H1 (cell line): ENCODE measurements at regions of chr7 and their contacts with region 1.

Region 1: DNA sequence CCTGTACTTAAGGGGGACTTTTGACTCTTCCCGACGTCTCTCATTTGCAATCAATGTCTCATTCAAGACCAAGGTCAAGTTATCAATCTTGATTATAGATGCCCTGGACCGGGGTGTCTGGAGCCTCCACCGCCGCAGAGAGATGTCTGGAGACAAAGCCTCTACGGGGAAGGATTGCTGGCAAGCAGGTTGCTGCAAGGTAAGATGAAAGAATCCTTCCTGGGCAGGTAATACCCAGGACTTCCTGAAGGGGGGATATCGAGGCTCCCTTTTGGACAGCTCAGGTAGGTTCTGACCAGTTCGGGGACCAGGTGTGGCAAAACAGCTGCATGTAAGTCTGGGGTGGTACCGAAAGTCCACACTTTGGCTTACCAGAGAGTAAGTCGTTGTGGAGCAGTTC is 12.5 kb upstream of the CUX1 start:
- DNase-seq: peak; percentile 27 to 84
- H3K4me3 ChIP-seq: peak overlapping the region; percentile 20 to 44 (median 21); a peak in 5 of 8 replicates
- H3K27ac ChIP-seq: no peak overlapping the region
- H3K4me1 ChIP-seq: peaks cover 4 to 15% (median 8%) of the 10 kb centered on the region in 4 experiments; a peak in 5 of 7 replicates
- H3K27me3 ChIP-seq: peaks cover 0 to 7% (median 2%) of the 10 kb centered on the region in 4 experiments; a peak in 4 of 7 replicates
- CTCF ChIP-seq: peak; percentile 34 to 71 (median 51)
- EP300 ChIP-seq: no peak
- POLR2A ChIP-seq: no peak
- RAD21 ChIP-seq: peak; percentile 46 to 67

Region 2: GRCh38 chr7:101688183-101688831 is 116.7 kb before region 1 on chr7:
- CTCF ChIA-PET with region 1: interaction called, 24 read pairs
- POLR2A ChIA-PET with region 1: no interaction called
- DNase-seq: peak in 1 of 2 experiments; percentile 98
- H3K4me3 ChIP-seq: peak overlapping the region in 1 of 4 experiments; percentile 43; a peak in 2 of 8 replicates
- H3K27ac ChIP-seq: no peak overlapping the region
- H3K4me1 ChIP-seq: no peaks in the 10 kb centered on the region; a peak in 2 of 7 replicates
- H3K27me3 ChIP-seq: peaks cover 0 to 2% (median 0%) of the 10 kb centered on the region in 4 experiments; a peak in 1 of 7 replicates
- CTCF ChIP-seq: peak; percentile 84 to 91 (median 86)
- EP300 ChIP-seq: no peak
- POLR2A ChIP-seq: no peak
- RAD21 ChIP-seq: peak; percentile 91 to 93

Region 3: GRCh38 chr7:101733713-101734475 is 71.1 kb before region 1 on chr7:
- CTCF ChIA-PET with region 1: interaction called, 10 read pairs
- POLR2A ChIA-PET with region 1: no interaction called
- DNase-seq: peak in 1 of 2 experiments; percentile 71
- H3K4me3 ChIP-seq: peak overlapping the region in 1 of 4 experiments; percentile 31; a peak in 1 of 8 replicates
- H3K27ac ChIP-seq: 0 out of 2 replicates have a peak overlapping the region, but pooled peaks have one; percentile 38
- H3K4me1 ChIP-seq: peaks cover 3 to 13% (median 7%) of the 10 kb centered on the region in 4 experiments; a peak in 5 of 7 replicates
- H3K27me3 ChIP-seq: no peaks in the 10 kb centered on the region
- CTCF ChIP-seq: no peak
- EP300 ChIP-seq: no peak
- POLR2A ChIP-seq: no peak
- RAD21 ChIP-seq: no peak

Region 4: DNA sequence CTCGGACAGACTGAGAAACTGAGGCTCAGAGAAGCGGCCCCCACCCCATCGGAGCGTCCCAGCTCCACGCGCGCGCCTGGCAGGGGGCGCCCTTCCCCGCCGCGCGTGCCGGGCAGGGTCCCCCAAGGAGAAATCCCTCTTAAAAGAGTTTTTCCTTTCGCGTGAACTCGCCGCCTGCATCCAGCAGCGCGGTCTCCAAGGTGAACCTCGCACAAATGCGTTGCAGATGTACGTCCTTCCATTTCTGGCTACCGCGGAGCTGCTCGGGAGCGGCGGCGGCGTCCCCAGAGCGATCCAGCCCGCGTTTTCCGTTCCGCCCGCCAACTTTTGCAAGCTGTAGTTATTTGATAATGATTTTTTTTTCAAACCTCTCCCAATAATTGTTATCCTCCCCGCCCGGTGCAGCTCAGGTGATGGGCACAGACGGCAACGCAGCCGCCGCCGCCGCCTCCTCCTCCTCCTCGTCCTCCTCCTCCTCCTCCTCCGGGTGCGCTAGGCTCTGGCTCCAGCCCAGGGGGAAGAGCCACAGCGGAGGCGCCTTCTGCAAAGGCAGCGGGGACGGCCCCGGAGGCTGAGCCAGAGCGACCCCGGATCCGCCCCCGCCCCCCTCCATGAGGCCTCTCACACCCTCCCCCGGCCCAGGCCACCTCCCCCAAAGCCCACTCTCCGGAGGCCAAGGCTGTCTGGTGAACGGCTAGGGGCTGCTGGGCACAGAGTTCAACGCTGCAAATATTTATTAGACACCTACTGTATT is 61.5 kb before region 1 on chr7:
- CTCF ChIA-PET with region 1: interaction called, 21 read pairs
- POLR2A ChIA-PET with region 1: interaction called, 9 read pairs
- DNase-seq: peak; percentile 25 to 81
- H3K4me3 ChIP-seq: peak overlapping the region; percentile 52 to 85 (median 60)
- H3K27ac ChIP-seq: peak overlapping the region; percentile 71; the same call in 1 of the 2 replicates
- H3K4me1 ChIP-seq: peaks cover 0 to 13% (median 9%) of the 10 kb centered on the region in 4 experiments; a peak in 6 of 7 replicates
- H3K27me3 ChIP-seq: no peaks in the 10 kb centered on the region
- CTCF ChIP-seq: peak in 1 of 3 experiments; percentile 8; a peak in 1 of 4 replicates
- EP300 ChIP-seq: no peak
- POLR2A ChIP-seq: no peak
- RAD21 ChIP-seq: peak in 1 of 2 experiments; percentile 3; a peak in 1 of 4 replicates

Region 5: DNA sequence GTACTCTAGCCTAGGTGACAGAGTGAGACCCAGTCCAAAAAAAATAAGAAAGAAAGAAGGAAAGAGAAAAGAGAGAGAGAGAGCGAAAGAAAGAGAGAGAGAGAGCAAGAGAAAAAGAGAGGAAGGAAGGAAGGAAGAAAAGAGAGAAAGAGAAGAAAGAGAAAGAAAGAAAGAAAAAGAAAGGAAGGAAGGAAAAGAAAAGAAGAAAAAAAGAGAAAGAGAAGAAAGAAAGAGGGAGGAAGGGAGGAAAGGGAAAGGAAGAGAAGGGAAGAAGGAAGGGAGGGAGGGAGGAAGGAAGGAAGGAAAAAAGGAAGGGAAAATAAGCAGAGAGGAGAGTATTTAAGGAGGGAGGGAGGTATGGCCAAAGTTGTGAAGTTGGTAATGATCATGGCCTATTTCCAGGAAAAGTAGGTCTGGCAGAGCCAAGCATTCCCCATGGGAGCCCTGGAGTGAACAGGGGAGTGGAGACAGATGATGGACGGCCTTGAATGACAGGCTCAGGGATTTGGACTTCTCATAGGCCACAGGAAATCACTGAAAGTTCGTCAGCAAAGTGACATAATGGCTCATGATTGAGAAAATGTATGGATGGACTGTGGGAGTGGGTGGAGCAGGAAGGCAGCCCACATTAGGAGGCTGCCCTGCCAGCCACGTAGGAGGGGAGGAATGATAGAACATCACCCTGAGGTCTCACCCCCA is 32.3 kb before region 1 on chr7:
- CTCF ChIA-PET with region 1: interaction called, 22 read pairs
- POLR2A ChIA-PET with region 1: no interaction called
- DNase-seq: no peak
- H3K4me3 ChIP-seq: no peak overlapping the region
- H3K27ac ChIP-seq: no peak overlapping the region
- H3K4me1 ChIP-seq: no peaks in the 10 kb centered on the region; a peak in 1 of 7 replicates
- H3K27me3 ChIP-seq: no peaks in the 10 kb centered on the region
- CTCF ChIP-seq: no peak
- EP300 ChIP-seq: no peak
- POLR2A ChIP-seq: no peak
- RAD21 ChIP-seq: no peak

Region 6: DNA sequence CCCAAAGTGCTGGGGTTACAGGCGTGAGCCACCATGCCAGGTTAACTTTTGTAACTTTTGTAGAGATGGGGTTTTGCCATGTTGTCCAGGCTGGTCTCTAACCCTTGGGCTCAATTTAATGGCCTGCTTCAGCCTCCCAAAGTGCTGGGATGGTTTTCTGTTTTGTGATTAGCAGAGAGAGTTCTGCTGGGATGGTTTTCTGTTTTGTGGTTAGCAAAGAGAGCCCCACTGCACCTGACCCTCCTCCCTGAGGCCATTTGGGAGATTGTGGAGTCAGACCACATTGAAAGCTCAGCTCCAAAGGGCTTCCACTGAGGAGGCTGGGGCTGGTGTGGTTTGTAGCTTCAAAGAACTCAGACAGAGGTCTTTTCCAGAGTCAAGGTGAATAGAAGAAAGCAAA is 17.1 kb before region 1 on chr7:
- CTCF ChIA-PET with region 1: interaction called, 11 read pairs
- POLR2A ChIA-PET with region 1: no interaction called
- DNase-seq: no peak
- H3K4me3 ChIP-seq: no peak overlapping the region
- H3K27ac ChIP-seq: no peak overlapping the region
- H3K4me1 ChIP-seq: no peaks in the 10 kb centered on the region
- H3K27me3 ChIP-seq: no peaks in the 10 kb centered on the region; a peak in 1 of 7 replicates
- CTCF ChIP-seq: no peak
- EP300 ChIP-seq: no peak
- POLR2A ChIP-seq: no peak
- RAD21 ChIP-seq: no peak

Region 7: GRCh38 chr7:101815835-101816493 is 11.0 kb after region 1 on chr7:
- CTCF ChIA-PET with region 1: interaction called, 13 read pairs
- POLR2A ChIA-PET with region 1: interaction called, 4 read pairs
- DNase-seq: peak; percentile 33 to 78
- H3K4me3 ChIP-seq: peak overlapping the region; percentile 61 to 88 (median 65)
- H3K27ac ChIP-seq: peak overlapping the region; percentile 47; the same call in 1 of the 2 replicates
- H3K4me1 ChIP-seq: peaks cover 9 to 23% (median 10%) of the 10 kb centered on the region in 4 experiments
- H3K27me3 ChIP-seq: peaks cover 0 to 14% (median 7%) of the 10 kb centered on the region in 4 experiments; a peak in 6 of 7 replicates
- CTCF ChIP-seq: no peak
- EP300 ChIP-seq: peak in 1 of 2 experiments; percentile 81; a peak in 1 of 3 replicates
- POLR2A ChIP-seq: peak in 1 of 2 experiments; percentile 43; a peak in 1 of 3 replicates
- RAD21 ChIP-seq: 0 out of 4 replicates have a peak, but pooled peaks have one; percentile 4 to 28

Region 8: GRCh38 chr7:101863598-101863997 is 58.6 kb after region 1 on chr7:
- CTCF ChIA-PET with region 1: no interaction called
- POLR2A ChIA-PET with region 1: no interaction called
- DNase-seq: no peak
- H3K4me3 ChIP-seq: no peak overlapping the region
- H3K27ac ChIP-seq: peak overlapping the region; percentile 36; the same call in 1 of the 2 replicates
- H3K4me1 ChIP-seq: peaks cover 16 to 27% (median 24%) of the 10 kb centered on the region in 4 experiments
- H3K27me3 ChIP-seq: no peaks in the 10 kb centered on the region
- CTCF ChIP-seq: no peak
- EP300 ChIP-seq: no peak
- POLR2A ChIP-seq: no peak
- RAD21 ChIP-seq: no peak